IMR-90 (cell line): ENCODE measurements at regions of chr4 and their contacts with region 1.

Region 1: DNA sequence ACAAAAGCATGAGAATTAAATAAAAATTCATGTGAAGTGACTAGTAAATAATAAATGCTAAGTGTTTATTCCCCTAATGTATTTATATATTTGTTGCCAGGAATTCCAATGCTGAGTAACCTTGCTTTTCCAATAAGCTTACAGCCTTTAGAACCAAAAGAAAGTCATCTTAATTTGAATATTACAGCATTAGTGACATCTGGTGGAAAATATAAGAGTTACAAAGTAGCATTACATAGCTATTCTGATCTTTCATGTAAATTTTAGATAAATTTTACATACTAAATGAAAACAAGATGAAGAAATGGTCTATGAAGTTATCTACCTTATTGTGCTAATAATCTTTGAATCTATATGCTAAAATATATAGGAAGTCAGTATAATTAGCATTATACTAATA is 10.4 kb downstream of the MAD2L1 start:
- DNase-seq: peak; percentile 70
- ATAC-seq: peak; percentile 71
- H3K4me3 ChIP-seq: no peak overlapping the region
- H3K27ac ChIP-seq: no peak overlapping the region
- H3K4me1 ChIP-seq: peaks cover 7% of the 10 kb centered on the region
- H3K27me3 ChIP-seq: no peaks in the 10 kb centered on the region
- CTCF ChIP-seq: peak; percentile 55
- POLR2A ChIP-seq: no peak
- RAD21 ChIP-seq: peak; percentile 64

Region 2: GRCh38 chr4:119300101-119300978 is 755.9 kb before region 1 on chr4:
- CTCF ChIA-PET with region 1: no interaction called
- POLR2A ChIA-PET with region 1: no interaction called
- dilution Hi-C with region 1: no loop called
- in situ Hi-C with region 1: loop called (anchors 5 kb)
- intact Hi-C with region 1: no loop called
- DNase-seq: peak; percentile 89
- ATAC-seq: peak; percentile 94
- H3K4me3 ChIP-seq: peak overlapping the region; percentile 70
- H3K27ac ChIP-seq: peak overlapping the region; percentile 90
- H3K4me1 ChIP-seq: no peaks in the 10 kb centered on the region; the same call in 1 of the 2 replicates
- H3K27me3 ChIP-seq: no peaks in the 10 kb centered on the region
- CTCF ChIP-seq: no peak
- POLR2A ChIP-seq: peak; percentile 88
- RAD21 ChIP-seq: no peak

Region 3: DNA sequence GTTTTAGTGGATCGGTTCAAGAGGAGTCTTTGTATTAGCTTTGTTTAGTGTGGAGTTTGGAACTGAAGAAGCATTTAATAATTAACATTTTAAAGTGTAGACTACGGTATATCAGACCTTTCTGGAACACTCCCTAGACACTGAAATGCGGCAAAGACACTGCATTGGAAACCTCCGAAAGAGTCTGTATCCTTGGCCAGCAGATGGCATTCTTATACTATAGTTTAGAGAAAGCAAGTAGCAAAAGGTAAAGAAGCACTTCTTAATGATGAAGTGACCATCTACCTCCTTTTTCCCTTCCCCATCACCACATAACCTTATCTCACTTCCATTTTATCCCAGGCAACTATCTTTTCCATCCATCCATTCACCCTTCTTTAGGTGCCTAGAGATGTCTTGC is 741.9 kb before region 1 on chr4:
- CTCF ChIA-PET with region 1: interaction called, 5 read pairs
- POLR2A ChIA-PET with region 1: no interaction called
- dilution Hi-C with region 1: no loop called
- in situ Hi-C with region 1: no loop called
- intact Hi-C with region 1: loop called (anchors 1 kb)
- DNase-seq: peak; percentile 59
- ATAC-seq: peak; percentile 86
- H3K4me3 ChIP-seq: no peak overlapping the region
- H3K27ac ChIP-seq: no peak overlapping the region
- H3K4me1 ChIP-seq: no peaks in the 10 kb centered on the region
- H3K27me3 ChIP-seq: no peaks in the 10 kb centered on the region
- CTCF ChIP-seq: peak; percentile 63
- POLR2A ChIP-seq: no peak
- RAD21 ChIP-seq: peak; percentile 72

Region 4: GRCh38 chr4:119508281-119508680 is 548.0 kb before region 1 on chr4:
- CTCF ChIA-PET with region 1: no interaction called
- POLR2A ChIA-PET with region 1: no interaction called
- dilution Hi-C with region 1: no loop called
- in situ Hi-C with region 1: no loop called
- intact Hi-C with region 1: loop called (anchors 2 kb)
- DNase-seq: peak; percentile 64
- ATAC-seq: peak; percentile 4; the same call in 1 of the 2 replicates
- H3K4me3 ChIP-seq: no peak overlapping the region
- H3K27ac ChIP-seq: no peak overlapping the region; the same call in 1 of the 2 replicates
- H3K4me1 ChIP-seq: peaks cover 8% of the 10 kb centered on the region
- H3K27me3 ChIP-seq: no peaks in the 10 kb centered on the region
- CTCF ChIP-seq: no peak
- POLR2A ChIP-seq: no peak
- RAD21 ChIP-seq: no peak